HepG2 (cell line): ENCODE measurements at regions of chr15 and their contacts with region 1.

Region 1: DNA sequence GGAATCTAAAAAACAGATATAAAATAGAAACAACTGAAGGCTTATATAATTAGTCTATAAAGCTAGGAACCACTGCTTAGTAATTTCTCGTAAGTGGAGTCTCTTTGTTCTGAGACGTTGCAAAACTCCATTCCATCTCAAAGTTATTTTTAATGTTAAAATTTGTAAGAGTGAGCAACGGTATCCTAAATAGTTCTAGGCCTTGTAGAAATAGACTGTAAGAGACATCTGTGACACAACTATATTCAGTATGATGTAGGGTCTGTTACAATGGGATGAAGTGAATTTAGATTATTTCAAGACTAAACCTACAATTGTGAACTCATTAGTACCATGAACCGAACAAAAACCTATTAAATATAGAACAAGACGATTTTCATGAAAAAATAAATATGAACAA is 57.2 kb downstream of the UBE3A start:
- DNase-seq: no peak
- ATAC-seq: no peak
- H3K4me3 ChIP-seq: no peak overlapping the region
- H3K27ac ChIP-seq: no peak overlapping the region
- H3K4me1 ChIP-seq: peaks cover 10% of the 10 kb centered on the region
- H3K27me3 ChIP-seq: no peaks in the 10 kb centered on the region
- CTCF ChIP-seq: no peak
- EP300 ChIP-seq: no peak
- POLR2A ChIP-seq: no peak
- RAD21 ChIP-seq: no peak

Region 2: DNA sequence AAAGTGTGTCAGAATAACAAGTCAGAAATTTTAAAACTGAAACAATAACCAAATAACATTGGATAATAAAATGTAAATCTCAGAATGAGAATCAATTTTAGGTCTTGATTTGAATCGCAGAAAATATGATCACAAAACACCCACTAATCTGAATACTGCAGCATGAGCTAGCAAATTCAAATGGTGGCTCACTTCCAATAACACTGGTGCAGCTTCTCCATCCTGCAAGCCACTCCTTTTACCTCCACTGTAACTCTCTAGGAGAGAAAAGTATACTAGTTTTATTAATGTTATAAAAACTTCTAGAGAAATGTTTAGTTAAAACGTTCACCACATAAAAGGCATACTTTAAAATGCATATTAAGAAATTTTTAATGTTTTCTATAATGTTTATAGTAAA is 26.8 kb after region 1 on chr15:
- CTCF ChIA-PET with region 1: no interaction called
- POLR2A ChIA-PET with region 1: no interaction called
- in situ Hi-C with region 1: no loop called
- intact Hi-C with region 1: loop called (anchors 1 kb)
- DNase-seq: no peak
- ATAC-seq: no peak
- H3K4me3 ChIP-seq: no peak overlapping the region
- H3K27ac ChIP-seq: no peak overlapping the region
- H3K4me1 ChIP-seq: peaks cover 4% of the 10 kb centered on the region; the same call in 1 of the 2 replicates
- H3K27me3 ChIP-seq: no peaks in the 10 kb centered on the region
- CTCF ChIP-seq: no peak
- EP300 ChIP-seq: no peak
- POLR2A ChIP-seq: no peak
- RAD21 ChIP-seq: no peak

Region 3: DNA sequence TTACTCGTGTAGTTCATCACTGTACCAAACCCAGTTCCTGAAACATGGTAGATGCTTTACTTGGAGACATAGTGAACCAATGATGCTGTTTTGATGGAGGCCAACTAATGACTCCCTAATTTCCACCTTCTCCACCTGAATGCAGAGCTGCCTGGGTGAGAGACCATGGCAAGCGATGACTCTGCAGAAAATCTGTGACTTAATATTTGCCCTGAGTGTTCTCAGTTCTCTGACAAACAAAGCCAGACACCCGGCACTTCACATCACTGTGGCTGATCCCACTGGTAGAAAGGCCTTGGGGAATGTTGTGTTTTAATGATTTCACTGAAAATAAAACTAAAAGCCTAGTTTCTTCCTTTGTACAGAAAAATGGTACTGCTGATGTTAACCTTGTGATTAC is 96.7 kb after region 1 on chr15:
- CTCF ChIA-PET with region 1: no interaction called
- POLR2A ChIA-PET with region 1: no interaction called
- in situ Hi-C with region 1: no loop called
- intact Hi-C with region 1: no loop called
- DNase-seq: no peak
- ATAC-seq: no peak
- H3K4me3 ChIP-seq: no peak overlapping the region
- H3K27ac ChIP-seq: no peak overlapping the region
- H3K4me1 ChIP-seq: no peaks in the 10 kb centered on the region
- H3K27me3 ChIP-seq: no peaks in the 10 kb centered on the region; a peak in 1 of 5 replicates
- CTCF ChIP-seq: no peak
- EP300 ChIP-seq: no peak
- POLR2A ChIP-seq: no peak
- RAD21 ChIP-seq: no peak